AG04449 (cell line): ENCODE measurements at regions of chr19 and their contacts with region 1.

Region 1: DNA sequence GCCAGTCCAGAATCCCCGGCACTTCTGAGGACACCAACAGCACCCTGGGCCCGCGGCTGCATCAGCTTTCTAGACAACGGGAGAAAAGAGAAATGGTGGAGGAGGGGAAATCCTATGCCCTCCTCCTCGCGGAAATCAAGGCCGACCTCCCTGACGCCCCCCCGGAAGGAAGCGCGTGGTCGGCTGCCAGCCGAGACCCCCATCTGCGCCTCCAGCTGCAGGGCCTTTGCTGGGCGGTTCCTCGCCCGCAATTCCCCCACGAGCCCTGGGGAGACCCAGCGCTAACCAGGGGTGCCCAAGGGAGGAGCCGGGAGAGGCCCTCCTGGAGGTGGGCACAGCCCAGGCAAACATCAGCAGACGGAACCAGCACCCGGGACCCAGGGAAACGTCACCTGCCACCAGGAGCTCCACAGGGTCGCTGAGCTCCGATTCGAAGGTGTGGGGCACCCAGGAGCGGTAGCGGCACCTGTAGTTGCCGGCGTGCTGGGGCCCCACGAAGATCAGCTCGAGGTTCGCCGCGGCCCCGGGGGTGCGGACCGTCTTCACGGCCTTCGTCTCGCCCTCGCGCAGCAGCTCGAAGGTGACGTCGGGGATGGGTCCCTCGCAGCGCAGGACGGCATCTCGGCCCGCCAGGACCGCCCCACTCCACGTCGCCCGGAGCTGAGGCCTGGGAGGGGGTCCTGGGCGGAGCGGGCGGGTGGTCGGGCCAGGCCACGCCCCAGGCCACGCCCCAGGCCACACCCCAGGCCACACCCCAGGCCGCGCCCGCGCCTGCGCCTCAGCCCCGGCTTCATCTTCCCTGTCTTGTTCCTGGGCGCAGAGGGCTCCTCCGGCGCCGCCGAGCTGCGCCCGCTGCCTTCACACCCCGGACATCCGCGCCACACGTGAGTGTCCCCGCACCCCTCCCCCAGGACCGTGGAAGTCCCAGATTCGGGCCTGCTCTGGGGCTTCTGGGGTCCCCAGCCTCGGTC is 6.0 kb downstream of the A1BG start:
- DNase-seq: no peak
- H3K4me3 ChIP-seq: peak overlapping the region; percentile 78
- CTCF ChIP-seq: no peak

Region 2: DNA sequence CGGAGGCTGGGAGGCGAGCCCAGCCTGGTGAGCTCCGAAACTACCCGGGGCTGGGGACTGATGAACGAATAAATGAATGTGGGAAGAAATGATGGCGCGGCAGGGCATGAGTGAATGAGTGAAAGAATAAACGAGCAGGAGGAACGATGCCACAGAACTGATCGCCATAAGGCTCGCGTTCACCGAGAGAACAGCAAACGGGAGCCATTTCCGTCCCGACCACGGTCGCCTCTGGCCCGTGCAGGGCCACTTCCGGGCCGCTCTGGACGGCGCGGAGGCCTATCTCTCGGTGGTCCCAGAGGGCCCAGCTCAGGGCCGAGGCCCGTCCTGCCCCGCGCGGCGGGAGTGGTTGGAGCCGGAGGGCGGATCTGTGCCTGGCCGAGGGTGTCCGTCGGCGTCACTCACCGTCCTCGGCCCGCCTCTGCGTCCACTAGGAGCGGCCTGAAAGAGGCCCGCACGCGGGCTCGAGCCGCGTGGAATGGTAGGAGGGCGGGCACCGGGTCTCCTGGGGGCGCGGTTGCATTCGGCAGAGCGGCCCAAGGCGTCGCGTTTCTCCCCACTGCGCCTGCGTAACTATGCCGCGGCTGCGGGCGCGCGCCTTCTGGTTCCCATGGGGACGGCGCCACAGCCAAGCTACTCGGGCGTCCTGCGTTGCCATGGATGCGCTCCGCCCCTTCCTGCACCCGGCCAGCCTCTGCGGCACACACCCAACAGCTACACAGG is 15.2 kb after region 1 on chr19 and contains the start of gene ZNF497:
- CTCF ChIA-PET with region 1: interaction called, 4 read pairs
- POLR2A ChIA-PET with region 1: interaction called, 22 read pairs
- DNase-seq: peak; percentile 66
- H3K4me3 ChIP-seq: peak within 1 kb of the TSS; percentile 67
- CTCF ChIP-seq: peak; percentile 2